Right lobe of liver (tissue), 6 donors: ENCODE measurements at regions of chr17 and their contacts with region 1.

Region 1: DNA sequence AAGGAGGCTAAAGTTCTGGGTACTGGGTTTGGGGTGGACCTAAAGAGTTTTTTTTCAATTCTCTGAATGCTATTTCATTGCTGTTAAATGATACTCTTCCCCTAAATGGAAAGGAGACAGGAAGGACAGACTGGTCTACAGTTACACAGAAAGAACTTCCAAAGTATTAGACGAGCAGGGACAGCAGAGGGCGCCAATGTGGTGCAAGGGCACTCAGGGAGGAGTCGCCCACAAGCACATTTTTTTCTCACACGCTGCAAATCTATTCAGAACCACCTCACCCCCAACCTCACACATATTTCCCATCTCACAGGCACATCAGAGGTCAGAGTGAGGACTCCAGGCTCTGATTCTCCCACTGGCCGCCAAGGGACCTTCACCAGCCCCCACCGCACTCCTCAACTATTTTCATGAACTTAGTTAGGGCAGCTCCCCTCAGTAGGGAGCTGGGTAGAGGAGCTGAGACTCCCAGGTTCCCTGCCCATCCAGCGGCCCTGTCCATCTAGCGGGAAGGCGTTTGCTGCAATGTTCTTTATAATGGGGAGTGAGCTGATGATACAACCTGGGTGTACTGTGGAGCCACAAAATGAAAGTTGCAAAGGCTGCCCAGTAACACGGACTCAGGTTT is 6.8 kb upstream of the CA4 start:
- DNase-seq: peak; percentile 82 to 87 (median 87)
- ATAC-seq: peak; percentile 81 to 89 (median 86)
- H3K4me3 ChIP-seq: no peak overlapping the region
- H3K27ac ChIP-seq: no peak overlapping the region
- H3K4me1 ChIP-seq: peaks cover 0 to 21% (median 5%) of the 10 kb centered on the region in 4 donors
- H3K27me3 ChIP-seq: peaks cover 8% of the 10 kb centered on the region in 2 donors
- CTCF ChIP-seq: peak; percentile 53 to 74 (median 71)
- POLR2A ChIP-seq: no peak

Region 2: GRCh38 chr17:59406808-59407429 is 736.1 kb before region 1 on chr17:
- intact Hi-C with region 1: no loop called
- DNase-seq: no peak
- ATAC-seq: peak in 1 of 4 donors; percentile 28
- H3K4me3 ChIP-seq: no peak overlapping the region
- H3K27ac ChIP-seq: no peak overlapping the region
- H3K4me1 ChIP-seq: peaks cover 0 to 4% (median 2%) of the 10 kb centered on the region in 4 donors
- H3K27me3 ChIP-seq: no peaks in the 10 kb centered on the region
- CTCF ChIP-seq: no peak
- POLR2A ChIP-seq: no peak

Region 3: GRCh38 chr17:60435244-60436167 is 292.5 kb after region 1 on chr17:
- intact Hi-C with region 1: loop called (anchors 10 kb)
- DNase-seq: peak in 1 of 3 donors; percentile 63
- ATAC-seq: peak; percentile 93 to 98 (median 96)
- H3K4me3 ChIP-seq: no peak overlapping the region
- H3K27ac ChIP-seq: no peak overlapping the region
- H3K4me1 ChIP-seq: no peaks in the 10 kb centered on the region
- H3K27me3 ChIP-seq: no peaks in the 10 kb centered on the region
- CTCF ChIP-seq: peak; percentile 91 to 98 (median 92)
- POLR2A ChIP-seq: no peak